ENCODE measurements at regions of chr1 and their contacts with region 1.

Region 1: DNA sequence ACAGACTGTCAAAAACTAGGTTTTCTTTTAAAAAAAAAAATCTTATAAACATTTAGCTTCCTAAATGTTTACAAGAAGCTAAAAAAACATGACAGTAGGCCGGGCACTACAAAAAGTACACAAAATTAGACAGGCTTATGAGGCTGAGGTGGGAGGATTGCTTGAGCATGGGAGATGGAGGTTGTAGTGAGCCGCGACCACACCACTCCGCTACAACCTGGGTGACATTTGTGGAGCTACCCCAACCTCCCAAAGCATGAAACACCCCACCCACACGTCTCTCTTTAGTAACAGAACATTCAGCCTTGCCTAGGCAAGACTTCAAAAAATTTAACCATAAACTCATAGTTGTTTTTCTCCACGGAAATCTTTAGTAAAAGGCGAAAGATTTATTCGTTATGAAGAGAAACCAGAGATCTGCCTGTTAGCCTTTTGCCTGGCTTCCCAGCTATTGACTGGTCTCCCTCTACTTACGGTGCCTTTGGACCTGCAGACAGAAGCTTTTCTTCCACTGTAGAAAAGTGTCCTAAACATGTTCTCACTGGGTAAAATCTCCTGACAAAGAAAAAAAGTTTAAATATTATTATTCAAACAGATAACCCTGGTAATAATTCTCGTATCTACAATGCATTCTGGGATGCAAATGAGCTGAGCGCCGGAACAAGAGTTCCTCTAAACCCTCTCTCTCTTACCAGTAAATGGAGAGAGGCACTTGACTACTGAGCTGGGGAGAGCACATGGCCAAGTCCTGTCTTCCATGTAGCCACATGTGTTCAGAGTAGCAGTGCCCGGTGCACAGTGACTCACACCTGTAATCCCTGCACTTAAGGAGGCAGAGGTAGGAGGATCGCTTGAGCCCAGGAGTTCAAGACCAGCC is 9.2 kb downstream of the RNU5D-1 start:
- DNase-seq: peak; percentile 96 to 99 (median 97)
- H3K4me3 ChIP-seq: peak overlapping the region in 4 of 7 experiments; percentile 2 to 32 (median 18)
- H3K27ac ChIP-seq: peak overlapping the region; percentile 98 to 99
- H3K4me1 ChIP-seq: peaks cover 5 to 63% (median 52%) of the 10 kb centered on the region in 4 experiments
- H3K27me3 ChIP-seq: no peaks in the 10 kb centered on the region

Region 2: DNA sequence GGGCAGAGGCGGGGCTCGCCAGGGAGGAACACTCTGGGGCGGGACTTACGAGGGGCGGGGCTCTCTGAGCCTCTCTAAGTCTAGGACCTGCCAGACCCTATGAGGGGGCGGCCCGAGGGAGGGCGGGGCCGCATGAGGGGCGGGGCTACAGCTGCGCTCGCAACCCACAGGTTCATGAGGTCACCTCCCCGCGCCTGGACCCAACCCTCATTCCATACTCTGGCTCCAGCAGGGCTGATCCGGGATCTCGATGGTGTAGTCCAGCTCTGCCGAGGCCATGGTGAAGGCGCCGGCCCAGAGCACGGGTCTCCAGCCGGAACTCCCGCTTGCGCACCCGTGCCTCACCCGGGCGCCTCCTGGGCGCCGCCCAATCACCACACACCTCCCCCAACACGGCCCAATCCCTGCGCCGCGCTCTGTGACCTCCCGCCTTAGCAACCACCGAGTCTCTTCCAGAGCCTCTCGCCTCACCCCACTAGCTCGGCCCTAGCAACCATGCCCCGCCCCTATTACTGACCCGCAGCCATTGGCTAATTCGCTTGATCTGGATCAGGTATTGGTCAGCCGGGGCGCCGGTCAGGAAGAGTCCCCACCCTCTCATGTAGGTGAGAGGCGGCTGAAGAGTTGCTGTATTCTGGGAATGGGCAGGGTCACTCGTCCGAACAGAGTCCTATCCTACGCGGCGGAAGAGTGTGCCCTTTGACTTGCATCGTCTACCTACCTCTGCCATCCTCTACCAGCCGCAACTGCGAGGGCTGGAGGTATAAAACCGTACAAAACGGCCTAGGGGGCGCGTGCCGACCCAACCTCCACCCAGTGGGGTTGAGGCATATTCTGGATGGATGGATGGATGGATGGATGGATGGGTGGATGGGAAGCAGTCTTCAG is 47.4 kb before region 1 on chr1 and contains the starts of genes ARMH1 and TMEM53:
- CTCF ChIA-PET with region 1: interaction called, 10 read pairs
- POLR2A ChIA-PET with region 1: interaction called, 15 read pairs
- DNase-seq: peak; percentile 99
- H3K4me3 ChIP-seq: peak within 1 kb of the TSS; percentile 63 to 92 (median 81)
- H3K27ac ChIP-seq: peak within 1 kb of the TSS; percentile 59 to 84
- H3K4me1 ChIP-seq: peaks cover 22 to 76% (median 53%) of the 10 kb centered on the region in 4 experiments
- H3K27me3 ChIP-seq: no peaks in the 10 kb centered on the region

Region 3: DNA sequence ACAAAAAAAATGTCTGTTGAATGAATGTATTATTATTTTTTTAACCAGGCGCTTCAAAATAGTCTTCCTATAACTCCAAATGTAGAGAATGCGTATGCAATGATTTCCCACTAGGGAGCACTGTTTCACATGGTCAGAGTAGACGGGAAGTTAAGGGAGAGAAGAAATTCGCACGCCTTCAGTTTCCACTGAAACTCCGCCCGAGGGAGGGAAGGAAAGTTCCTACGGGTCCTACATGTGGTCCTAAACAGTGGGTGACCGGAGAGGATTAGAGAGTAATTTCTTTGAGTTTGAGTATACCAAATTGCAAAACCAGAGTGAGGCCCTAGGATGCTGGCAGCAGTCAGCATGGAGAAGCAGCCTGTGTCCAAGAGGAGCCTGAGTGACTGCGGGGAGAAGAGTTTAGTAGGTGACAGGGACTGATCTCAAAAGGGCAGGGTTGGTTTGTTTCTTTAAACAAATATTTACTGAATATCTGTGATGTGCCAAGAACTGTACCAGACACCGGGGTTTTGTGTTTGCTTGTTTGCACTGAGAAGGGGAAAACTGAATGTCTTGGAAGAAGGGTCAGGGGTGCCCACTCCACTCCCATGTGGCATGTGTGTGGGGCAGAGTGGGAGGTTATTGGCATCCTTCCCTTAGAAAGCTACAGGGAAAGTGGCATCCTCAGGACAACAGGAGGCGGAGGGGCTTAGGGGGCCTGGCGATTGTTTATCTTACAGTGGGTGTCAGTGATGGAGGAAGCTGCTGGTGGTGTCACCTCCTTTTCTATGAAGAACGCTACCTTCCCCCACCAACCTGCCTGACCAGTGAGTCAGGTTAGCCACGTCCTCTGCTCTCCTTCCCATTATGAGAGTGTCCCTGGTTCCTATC is 13.5 kb before region 1 on chr1:
- CTCF ChIA-PET with region 1: interaction called, 12 read pairs
- POLR2A ChIA-PET with region 1: interaction called, 3 read pairs
- DNase-seq: peak; percentile 63 to 75 (median 71)
- H3K4me3 ChIP-seq: peak overlapping the region in 3 of 7 experiments; percentile 6 to 31 (median 20)
- H3K27ac ChIP-seq: no peak overlapping the region
- H3K4me1 ChIP-seq: peaks cover 0 to 14% (median 7%) of the 10 kb centered on the region in 4 experiments
- H3K27me3 ChIP-seq: no peaks in the 10 kb centered on the region

Region 4: GRCh38 chr1:44799770-44800584 is 78.3 kb after region 1 on chr1 and contains the start of gene PLK3:
- CTCF ChIA-PET with region 1: no interaction called
- POLR2A ChIA-PET with region 1: interaction called, 21 read pairs
- DNase-seq: peak; percentile 97 to 99 (median 99)
- H3K4me3 ChIP-seq: peak within 1 kb of the TSS; percentile 58 to 86 (median 78)
- H3K27ac ChIP-seq: peak within 1 kb of the TSS in 1 of 2 experiments; percentile 71
- H3K4me1 ChIP-seq: peaks cover 0 to 32% (median 24%) of the 10 kb centered on the region in 4 experiments
- H3K27me3 ChIP-seq: no peaks in the 10 kb centered on the region

Region 5: DNA sequence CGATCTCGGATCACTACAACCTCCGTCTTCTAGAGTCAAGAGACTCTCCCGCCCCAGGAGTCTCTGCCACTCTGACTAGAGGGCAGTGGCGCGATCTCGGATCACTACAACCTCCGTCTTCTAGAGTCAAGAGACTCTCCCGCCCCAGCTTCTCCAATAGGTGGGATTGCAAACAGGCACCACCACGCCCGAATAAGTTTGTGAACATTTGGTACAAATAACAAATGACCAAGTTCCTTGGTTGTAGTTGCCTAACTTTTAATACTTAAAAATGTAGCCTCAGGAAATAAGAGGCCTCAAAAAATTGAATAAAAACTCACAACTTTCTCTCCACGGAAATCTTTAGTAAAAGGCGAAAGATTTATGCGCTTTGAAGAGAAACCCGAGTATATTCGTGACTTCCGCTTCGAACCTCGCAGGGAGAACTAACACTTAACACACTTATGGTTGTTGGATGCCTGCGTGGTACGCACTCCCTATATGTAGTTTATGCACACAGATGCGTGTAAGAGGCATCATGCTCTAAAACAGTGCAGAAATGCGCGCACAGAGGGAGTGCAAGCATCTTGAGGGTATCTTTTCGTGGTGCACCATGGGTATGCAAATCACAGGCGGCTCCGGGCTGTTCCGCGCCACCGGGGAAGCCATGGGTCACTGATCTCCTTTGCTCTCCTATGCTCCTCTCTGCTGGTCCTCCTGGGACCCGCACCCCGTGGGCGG is 98.0 kb after region 1 on chr1:
- CTCF ChIA-PET with region 1: interaction called, 6 read pairs
- POLR2A ChIA-PET with region 1: interaction called, 44 read pairs
- DNase-seq: peak; percentile 93 to 97 (median 94)
- H3K4me3 ChIP-seq: peak overlapping the region; percentile 52 to 93 (median 80)
- H3K27ac ChIP-seq: peak overlapping the region; percentile 100
- H3K4me1 ChIP-seq: peaks cover 0 to 35% (median 22%) of the 10 kb centered on the region in 4 experiments
- H3K27me3 ChIP-seq: no peaks in the 10 kb centered on the region

Measured in common myeloid progenitor, CD34-positive (primary cell).